Lower leg skin (tissue), 4 donors: ENCODE measurements at regions of chr2 and their contacts with region 1.

Region 1: GRCh38 chr2:215937190-215937589 is 76.2 kb downstream of the MREG start:
- DNase-seq: no peak
- H3K4me3 ChIP-seq: no peak overlapping the region
- CTCF ChIP-seq: no peak
- POLR2A ChIP-seq: no peak

Region 2: GRCh38 chr2:215862351-215862771 is 74.8 kb before region 1 on chr2:
- intact Hi-C with region 1: no loop called
- DNase-seq: no peak
- H3K4me3 ChIP-seq: no peak overlapping the region
- CTCF ChIP-seq: no peak
- POLR2A ChIP-seq: no peak

Region 3: GRCh38 chr2:215912299-215912842 is 24.8 kb before region 1 on chr2:
- intact Hi-C with region 1: loop called (anchors 1 kb)
- DNase-seq: no peak
- H3K4me3 ChIP-seq: no peak overlapping the region
- CTCF ChIP-seq: no peak
- POLR2A ChIP-seq: no peak